BJ (cell line): ENCODE measurements at regions of chr15 and their contacts with region 1.

Region 1: DNA sequence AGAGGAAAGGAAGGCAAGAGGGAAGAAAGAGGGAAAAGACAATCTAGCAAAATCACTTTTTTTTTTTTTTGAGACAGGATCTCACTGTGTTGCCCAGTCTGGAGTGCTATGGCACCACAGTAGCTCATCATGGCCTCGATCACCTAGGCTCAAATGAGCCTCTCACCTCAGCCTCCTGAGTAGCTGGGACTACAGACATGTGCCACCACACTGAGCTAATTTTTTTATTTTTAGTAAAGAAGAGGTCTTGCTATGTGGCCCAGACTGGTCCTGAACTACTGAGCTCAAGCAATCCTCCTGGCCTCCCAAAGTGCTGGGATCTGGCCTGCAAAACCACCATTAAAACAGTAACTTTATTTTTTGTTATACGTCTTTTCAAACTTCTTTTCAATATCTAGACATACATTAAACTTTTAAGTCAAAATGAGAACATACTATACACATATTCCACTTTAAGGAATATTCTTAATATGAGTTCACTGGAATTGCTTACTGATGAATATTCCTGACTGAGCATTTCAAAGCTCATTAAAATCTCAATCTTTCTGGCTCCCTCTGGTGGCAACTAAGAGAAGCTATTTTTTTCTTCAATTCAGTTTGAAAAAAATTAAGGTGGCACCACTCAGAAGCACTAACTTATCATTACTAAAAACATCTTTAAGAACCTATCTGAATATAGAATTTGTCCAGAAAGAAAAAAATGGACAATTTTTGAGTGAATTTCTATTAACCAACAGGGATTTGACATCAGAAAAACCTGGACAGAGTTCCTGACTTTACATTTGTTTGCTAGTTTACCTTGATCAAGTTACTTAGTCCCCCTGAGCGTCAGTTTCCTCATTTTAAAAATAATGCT is 40.9 kb downstream of the UACA start:
- DNase-seq: no peak
- H3K4me3 ChIP-seq: no peak overlapping the region
- H3K27me3 ChIP-seq: no peaks in the 10 kb centered on the region
- CTCF ChIP-seq: peak; percentile 68

Region 2: DNA sequence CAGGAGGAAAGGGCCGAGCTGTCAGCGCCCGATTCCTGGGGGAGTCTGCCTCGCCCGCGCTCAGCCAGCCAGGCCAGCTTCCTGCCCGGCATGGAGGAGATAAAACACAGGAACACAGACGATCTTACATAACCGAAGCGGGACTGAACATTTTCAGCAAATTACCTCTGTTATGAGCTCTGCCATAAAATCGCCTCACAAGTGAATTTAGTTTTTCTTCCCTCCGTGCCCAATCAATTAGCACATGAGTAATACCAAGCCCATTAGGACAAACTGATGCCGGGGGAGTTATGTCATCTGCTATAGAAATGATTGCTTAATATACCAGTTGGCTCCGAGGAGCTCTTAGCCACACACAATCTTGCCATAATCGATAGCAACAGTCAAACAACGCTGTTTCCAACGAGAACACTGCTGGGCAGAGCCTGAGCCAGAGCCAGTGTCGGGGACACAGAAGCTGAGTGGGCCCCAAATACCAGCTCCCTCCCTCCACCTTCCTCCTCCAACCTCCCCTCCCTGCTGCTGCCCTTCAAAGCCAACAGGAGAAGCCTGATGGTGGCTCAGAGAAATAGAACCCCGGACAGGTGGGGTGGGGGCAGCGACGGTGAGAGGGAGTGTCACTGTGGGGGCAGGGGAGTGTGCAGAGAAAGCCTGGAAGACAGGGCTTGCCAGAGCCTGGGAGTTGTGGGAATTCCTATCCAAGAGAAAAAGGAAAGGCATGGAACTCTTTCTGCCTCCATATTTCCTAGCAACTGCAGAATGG is 345.4 kb before region 1 on chr15:
- CTCF ChIA-PET with region 1: no interaction called
- POLR2A ChIA-PET with region 1: no interaction called
- DNase-seq: peak; percentile 7
- H3K4me3 ChIP-seq: no peak overlapping the region
- H3K27me3 ChIP-seq: peaks cover 7% of the 10 kb centered on the region; the same call in 1 of the 2 replicates
- CTCF ChIP-seq: no peak

Region 3: GRCh38 chr15:70569091-70569621 is 153.3 kb before region 1 on chr15:
- CTCF ChIA-PET with region 1: interaction called, 10 read pairs
- POLR2A ChIA-PET with region 1: no interaction called
- DNase-seq: no peak
- H3K4me3 ChIP-seq: no peak overlapping the region
- H3K27me3 ChIP-seq: peaks cover 1% of the 10 kb centered on the region
- CTCF ChIP-seq: peak; percentile 76

Region 4: GRCh38 chr15:70670680-70671079 is 51.8 kb before region 1 on chr15:
- CTCF ChIA-PET with region 1: interaction called, 11 read pairs
- POLR2A ChIA-PET with region 1: no interaction called
- DNase-seq: no peak
- H3K4me3 ChIP-seq: no peak overlapping the region
- H3K27me3 ChIP-seq: no peaks in the 10 kb centered on the region
- CTCF ChIP-seq: peak; percentile 15; the same call in 1 of the 2 replicates

Region 5: GRCh38 chr15:70679919-70680231 is 42.6 kb before region 1 on chr15:
- CTCF ChIA-PET with region 1: interaction called, 13 read pairs
- POLR2A ChIA-PET with region 1: no interaction called
- DNase-seq: no peak
- H3K4me3 ChIP-seq: no peak overlapping the region
- H3K27me3 ChIP-seq: no peaks in the 10 kb centered on the region
- CTCF ChIP-seq: no peak

Region 6: GRCh38 chr15:70701891-70702568 is 20.5 kb before region 1 on chr15:
- CTCF ChIA-PET with region 1: interaction called, 18 read pairs
- POLR2A ChIA-PET with region 1: no interaction called
- DNase-seq: no peak
- H3K4me3 ChIP-seq: no peak overlapping the region
- H3K27me3 ChIP-seq: no peaks in the 10 kb centered on the region
- CTCF ChIP-seq: no peak

Region 7: DNA sequence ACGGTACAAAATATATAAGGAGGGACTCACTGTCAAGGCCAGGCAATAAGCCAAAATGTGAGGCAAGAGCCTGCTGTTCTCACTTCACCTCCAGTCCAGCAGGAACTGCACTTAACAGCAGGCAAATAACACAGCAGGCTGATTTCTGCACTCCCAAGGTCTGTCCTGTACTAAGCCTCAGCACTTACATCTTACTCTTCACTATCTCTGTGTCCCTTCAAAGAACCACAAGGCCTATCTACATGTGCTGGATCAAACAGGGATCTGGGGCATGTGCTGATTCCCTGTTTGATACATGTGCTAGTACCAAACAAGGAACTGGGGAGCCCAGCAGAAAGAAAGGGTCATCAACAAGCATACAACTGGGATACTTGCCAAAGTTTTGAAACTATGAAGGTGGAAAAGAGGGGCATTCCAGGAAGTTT is 18.6 kb after region 1 on chr15:
- CTCF ChIA-PET with region 1: interaction called, 21 read pairs
- POLR2A ChIA-PET with region 1: interaction called, 4 read pairs
- DNase-seq: no peak
- H3K4me3 ChIP-seq: no peak overlapping the region
- H3K27me3 ChIP-seq: no peaks in the 10 kb centered on the region
- CTCF ChIP-seq: no peak

Region 8: DNA sequence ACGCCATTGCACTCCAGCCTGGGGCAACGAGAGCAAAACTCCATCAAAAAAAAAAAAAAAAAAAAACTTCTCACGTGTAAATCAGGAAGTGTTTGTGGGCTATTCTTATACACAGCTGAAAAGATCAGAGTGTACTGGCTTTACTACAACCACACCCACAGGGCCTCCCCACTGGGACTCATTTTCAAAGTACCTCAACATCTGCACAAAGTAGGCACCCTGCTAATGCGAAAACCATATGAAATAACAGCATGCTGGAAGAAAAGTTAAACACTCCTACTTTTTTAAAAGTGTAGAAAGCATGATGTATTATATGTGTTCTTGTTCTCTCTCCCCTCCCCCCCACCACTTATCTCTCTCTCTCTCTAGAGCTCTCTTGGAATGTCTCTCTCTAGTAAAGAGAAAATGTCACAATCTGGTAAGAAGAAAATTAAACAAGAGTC is 29.7 kb after region 1 on chr15:
- CTCF ChIA-PET with region 1: interaction called, 12 read pairs
- POLR2A ChIA-PET with region 1: no interaction called
- DNase-seq: no peak
- H3K4me3 ChIP-seq: no peak overlapping the region
- H3K27me3 ChIP-seq: no peaks in the 10 kb centered on the region
- CTCF ChIP-seq: no peak

Region 9: GRCh38 chr15:71066983-71067382 is 344.5 kb after region 1 on chr15:
- CTCF ChIA-PET with region 1: no interaction called
- POLR2A ChIA-PET with region 1: no interaction called
- DNase-seq: no peak
- H3K4me3 ChIP-seq: no peak overlapping the region
- H3K27me3 ChIP-seq: no peaks in the 10 kb centered on the region
- CTCF ChIP-seq: no peak